OCI-LY7 (cell line): ENCODE measurements at regions of chr3 and their contacts with region 1.

Region 1: DNA sequence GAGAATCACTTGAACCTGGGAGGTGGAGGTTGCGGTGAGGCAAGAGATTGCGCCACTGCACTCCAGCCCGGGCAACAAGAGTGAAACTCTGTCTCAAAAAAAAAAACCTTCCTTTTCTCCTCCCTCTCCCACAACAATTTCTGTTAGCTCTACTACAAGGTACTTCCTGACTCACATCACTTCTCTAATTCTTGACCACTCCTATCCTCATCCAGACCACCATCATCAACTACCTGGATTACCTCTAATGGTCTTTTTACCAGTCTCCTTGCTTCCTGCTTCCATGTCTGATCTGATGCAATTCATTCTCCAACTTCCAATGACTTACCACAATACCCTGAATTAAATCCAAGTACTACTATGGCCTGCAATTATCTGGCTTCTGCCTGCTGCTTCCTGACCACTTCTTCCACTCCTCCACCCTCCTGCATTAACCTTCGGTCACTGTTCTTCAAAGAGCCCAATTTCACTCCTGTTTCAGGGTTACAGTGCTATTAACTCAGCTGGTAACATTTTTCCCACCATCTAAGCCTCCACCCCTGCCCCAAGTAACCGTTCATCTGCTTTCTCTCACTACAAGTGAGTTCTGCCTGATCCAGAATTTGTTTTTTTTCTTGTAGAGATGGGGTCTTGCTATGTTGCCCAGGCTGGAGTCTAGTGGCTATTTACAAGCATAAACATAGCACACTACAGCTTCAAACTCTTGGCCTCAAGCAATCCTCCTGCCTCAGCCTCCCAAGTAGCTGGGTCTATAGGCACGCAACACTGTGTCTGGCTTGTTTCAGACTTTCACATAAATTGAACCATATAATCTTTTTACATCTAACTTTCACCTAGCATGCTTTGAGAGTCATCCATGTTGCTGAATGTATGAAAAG is 27.8 kb downstream of the DCAF1 start:
- DNase-seq: no peak
- H3K4me3 ChIP-seq: no peak overlapping the region
- H3K27ac ChIP-seq: no peak overlapping the region
- H3K4me1 ChIP-seq: no peaks in the 10 kb centered on the region
- CTCF ChIP-seq: no peak

Region 2: DNA sequence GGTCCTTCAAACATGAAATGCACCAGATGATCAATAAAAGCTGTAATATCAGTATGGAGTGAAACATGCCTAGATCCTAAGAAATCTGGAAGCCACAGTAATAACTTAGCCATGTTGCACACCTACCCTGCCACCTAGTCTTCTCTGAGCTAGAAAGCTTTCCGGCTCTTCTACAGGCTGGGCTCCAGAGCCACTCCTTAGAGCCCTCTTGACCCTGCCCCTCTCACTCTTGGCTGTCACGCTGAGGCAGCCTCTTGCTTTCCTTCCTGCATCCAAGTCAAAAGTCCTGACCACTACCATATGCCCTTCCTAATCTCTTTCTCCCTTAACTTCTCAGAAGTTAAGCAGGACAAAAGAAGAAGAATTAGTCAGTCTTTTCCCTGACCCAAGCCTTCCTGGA is 63.2 kb before region 1 on chr3:
- CTCF ChIA-PET with region 1: no interaction called
- POLR2A ChIA-PET with region 1: interaction called, 10 read pairs
- intact Hi-C with region 1: no loop called
- DNase-seq: no peak
- H3K4me3 ChIP-seq: no peak overlapping the region
- H3K27ac ChIP-seq: no peak overlapping the region
- H3K4me1 ChIP-seq: no peaks in the 10 kb centered on the region
- CTCF ChIP-seq: no peak